Tibial artery (tissue), 4 donors: ENCODE measurements at regions of chr16 and their contacts with region 1.

Region 1: GRCh38 chr16:83305092-83305491 is 502.7 kb upstream of the HSBP1 start:
- DNase-seq: no peak
- H3K4me3 ChIP-seq: no peak overlapping the region
- H3K27ac ChIP-seq: no peak overlapping the region
- H3K4me1 ChIP-seq: peaks cover 0 to 41% (median 12%) of the 10 kb centered on the region in 4 donors
- H3K27me3 ChIP-seq: no peaks in the 10 kb centered on the region
- CTCF ChIP-seq: no peak

Region 2: GRCh38 chr16:83345836-83346235 is 40.7 kb after region 1 on chr16:
- intact Hi-C with region 1: loop called (anchors 5 kb)
- DNase-seq: no peak
- H3K4me3 ChIP-seq: no peak overlapping the region
- H3K27ac ChIP-seq: no peak overlapping the region
- H3K4me1 ChIP-seq: peaks cover 0 to 5% (median 0%) of the 10 kb centered on the region in 4 donors
- H3K27me3 ChIP-seq: no peaks in the 10 kb centered on the region
- CTCF ChIP-seq: no peak